ENCODE measurements at regions of chr2 and their contacts with region 1.

Region 1: DNA sequence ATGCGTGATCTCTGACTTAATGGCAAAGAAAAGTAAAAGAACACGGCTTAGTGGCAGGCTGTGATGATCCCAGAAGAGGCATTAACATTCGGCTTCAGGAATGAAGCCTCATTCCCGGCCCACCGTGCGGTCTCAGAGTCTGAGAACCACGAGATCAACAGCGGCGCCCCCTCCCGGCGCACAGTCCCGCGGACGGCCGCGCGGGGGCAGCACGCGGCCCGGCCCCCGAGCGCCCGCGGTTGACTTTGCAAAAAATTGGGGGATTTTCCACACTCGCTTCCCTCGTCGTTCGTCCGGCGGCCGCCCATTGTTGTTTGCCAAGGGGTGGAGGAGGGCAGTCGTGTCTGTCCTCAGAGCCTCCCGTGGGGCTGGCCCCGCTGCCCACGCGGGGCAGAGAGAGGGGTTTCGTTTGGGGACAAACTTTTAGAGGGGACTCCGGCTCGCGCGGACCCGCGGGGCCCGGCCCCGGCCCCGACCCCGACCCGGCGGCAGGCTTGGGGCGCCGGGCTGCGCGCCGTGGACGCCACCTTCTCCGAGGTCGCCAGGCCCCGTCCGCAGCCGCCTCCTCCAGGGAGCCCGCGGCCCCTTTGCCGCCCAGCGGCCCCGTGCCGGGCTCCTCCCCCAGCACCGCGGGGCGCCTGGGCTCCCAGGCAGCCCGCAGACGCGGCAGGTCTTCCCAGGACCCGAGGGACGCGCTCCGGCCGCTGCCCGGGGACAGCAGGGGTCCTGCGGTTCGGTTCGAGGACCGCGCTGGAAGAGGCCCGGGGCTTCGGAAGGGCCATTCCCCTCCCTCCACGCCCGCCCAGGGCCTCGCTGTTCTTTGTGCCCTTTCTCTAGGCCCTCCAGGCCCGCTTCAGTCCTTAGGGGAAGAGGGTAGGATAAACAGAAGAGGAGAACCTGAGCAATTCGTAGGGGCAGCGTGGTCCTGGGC is 3.4 kb upstream of the HS6ST1 start:
- DNase-seq: peak; percentile 54 to 91 (median 74)
- ATAC-seq: peak; percentile 65
- H3K4me3 ChIP-seq: peak overlapping the region; percentile 54
- H3K4me3 Mint-ChIP-seq: peak overlapping the region; percentile 87
- H3K27ac ChIP-seq: no peak overlapping the region
- H3K27ac Mint-ChIP-seq: peak overlapping the region; percentile 42
- H3K4me1 ChIP-seq: peaks cover 25% of the 10 kb centered on the region
- H3K4me1 Mint-ChIP-seq: peaks cover 22% of the 10 kb centered on the region
- H3K27me3 ChIP-seq: no peaks in the 10 kb centered on the region
- H3K27me3 Mint-ChIP-seq: no peaks in the 10 kb centered on the region
- CTCF ChIP-seq: peak; percentile 89

Region 2: DNA sequence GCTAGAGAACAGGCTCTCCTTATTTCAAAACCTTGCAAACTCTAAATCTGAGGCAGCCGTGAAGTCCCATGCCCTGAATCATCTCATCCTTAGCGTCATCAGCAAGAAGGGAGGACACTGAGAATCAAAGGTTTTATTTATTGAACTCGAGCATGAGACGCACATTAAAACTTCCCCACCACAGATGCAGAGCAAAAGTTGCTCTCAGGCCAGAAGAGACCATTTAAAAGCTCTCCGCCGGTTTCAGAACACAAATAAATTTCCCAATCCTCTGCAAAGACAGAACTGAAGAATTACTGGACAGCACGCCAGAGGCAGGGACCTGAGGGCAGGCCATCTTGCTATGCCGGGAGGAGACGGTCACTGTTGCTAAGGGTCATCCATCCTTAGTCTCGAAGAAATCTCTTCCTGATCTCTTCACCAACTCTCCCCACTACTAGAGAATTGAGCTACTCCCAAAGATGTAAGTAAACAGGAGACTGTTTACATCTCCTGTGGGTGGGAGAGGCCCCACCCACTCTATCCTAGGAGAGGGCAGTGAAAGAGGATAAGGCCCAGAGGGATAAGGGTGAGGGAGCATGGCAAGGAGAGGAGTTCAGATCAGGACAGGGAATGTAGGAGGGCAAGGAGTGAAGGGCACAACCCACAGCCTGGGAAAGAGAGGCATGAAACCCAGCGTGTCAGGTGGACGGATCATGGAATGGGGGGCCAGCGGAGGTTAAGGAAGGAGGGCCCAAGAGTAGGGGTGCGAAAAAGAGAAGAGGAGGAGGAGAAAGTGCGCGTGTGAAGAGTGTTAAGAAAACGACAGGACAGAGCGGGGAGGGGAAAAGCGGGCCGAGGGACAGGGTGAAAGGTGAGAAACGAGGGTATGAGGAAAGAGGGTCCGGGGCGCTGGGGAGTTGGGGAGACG is 437.4 kb before region 1 on chr2:
- CTCF ChIA-PET with region 1: no interaction called
- POLR2A ChIA-PET with region 1: no interaction called
- intact Hi-C with region 1: loop called in 1 of 2 experiments (anchors 10 kb)
- DNase-seq: no peak
- ATAC-seq: no peak
- H3K4me3 ChIP-seq: peak overlapping the region; percentile 46
- H3K4me3 Mint-ChIP-seq: peak overlapping the region; percentile 97
- H3K27ac ChIP-seq: no peak overlapping the region
- H3K27ac Mint-ChIP-seq: peak overlapping the region; percentile 88
- H3K4me1 ChIP-seq: peaks cover 21% of the 10 kb centered on the region
- H3K4me1 Mint-ChIP-seq: peaks cover 64% of the 10 kb centered on the region
- H3K27me3 ChIP-seq: no peaks in the 10 kb centered on the region
- H3K27me3 Mint-ChIP-seq: no peaks in the 10 kb centered on the region
- CTCF ChIP-seq: no peak

Region 3: GRCh38 chr2:128090945-128091725 is 230.9 kb before region 1 on chr2 and contains the start of gene UGGT1:
- CTCF ChIA-PET with region 1: no interaction called
- POLR2A ChIA-PET with region 1: no interaction called
- intact Hi-C with region 1: loop called in 1 of 2 experiments (anchors 5 kb)
- DNase-seq: peak; percentile 88 to 98 (median 91)
- ATAC-seq: peak; percentile 96
- H3K4me3 ChIP-seq: peak within 1 kb of the TSS; percentile 89
- H3K4me3 Mint-ChIP-seq: peak within 1 kb of the TSS; percentile 98
- H3K27ac ChIP-seq: peak within 1 kb of the TSS; percentile 75 to 82
- H3K27ac Mint-ChIP-seq: peak within 1 kb of the TSS; percentile 97
- H3K4me1 ChIP-seq: peaks cover 26% of the 10 kb centered on the region
- H3K4me1 Mint-ChIP-seq: peaks cover 53% of the 10 kb centered on the region
- H3K27me3 ChIP-seq: no peaks in the 10 kb centered on the region
- H3K27me3 Mint-ChIP-seq: no peaks in the 10 kb centered on the region
- CTCF ChIP-seq: no peak
- total RNA-seq, gene UGGT1: 23.5 to 28.4 TPM

Region 4: GRCh38 chr2:128187032-128187654 is 134.9 kb before region 1 on chr2:
- CTCF ChIA-PET with region 1: no interaction called
- POLR2A ChIA-PET with region 1: no interaction called
- intact Hi-C with region 1: loop called in 1 of 2 experiments (anchors 10 kb)
- DNase-seq: no peak
- ATAC-seq: no peak
- H3K4me3 ChIP-seq: no peak overlapping the region
- H3K4me3 Mint-ChIP-seq: no peak overlapping the region
- H3K27ac ChIP-seq: no peak overlapping the region
- H3K27ac Mint-ChIP-seq: no peak overlapping the region
- H3K4me1 ChIP-seq: no peaks in the 10 kb centered on the region
- H3K4me1 Mint-ChIP-seq: no peaks in the 10 kb centered on the region
- H3K27me3 ChIP-seq: no peaks in the 10 kb centered on the region
- H3K27me3 Mint-ChIP-seq: no peaks in the 10 kb centered on the region
- CTCF ChIP-seq: no peak

Region 5: GRCh38 chr2:129849559-129850160 is 1527.6 kb after region 1 on chr2:
- CTCF ChIA-PET with region 1: no interaction called
- POLR2A ChIA-PET with region 1: no interaction called
- intact Hi-C with region 1: loop called in 1 of 2 experiments (anchors 2 kb)
- DNase-seq: peak in 3 of 14 experiments; percentile 74 to 80 (median 79)
- ATAC-seq: peak; percentile 81
- H3K4me3 ChIP-seq: no peak overlapping the region
- H3K4me3 Mint-ChIP-seq: no peak overlapping the region
- H3K27ac ChIP-seq: no peak overlapping the region
- H3K27ac Mint-ChIP-seq: no peak overlapping the region
- H3K4me1 ChIP-seq: no peaks in the 10 kb centered on the region
- H3K4me1 Mint-ChIP-seq: peaks cover 5% of the 10 kb centered on the region
- H3K27me3 ChIP-seq: peaks cover 4 to 6% of the 10 kb centered on the region in 2 experiments
- H3K27me3 Mint-ChIP-seq: peaks cover 32% of the 10 kb centered on the region
- CTCF ChIP-seq: peak; percentile 75

Region 6: GRCh38 chr2:129923265-129924091 is 1601.4 kb after region 1 on chr2:
- CTCF ChIA-PET with region 1: no interaction called
- POLR2A ChIA-PET with region 1: no interaction called
- intact Hi-C with region 1: loop called in 1 of 2 experiments (anchors 5 kb)
- DNase-seq: peak in 2 of 14 experiments; percentile 4 to 24
- ATAC-seq: no peak
- H3K4me3 ChIP-seq: no peak overlapping the region
- H3K4me3 Mint-ChIP-seq: no peak overlapping the region
- H3K27ac ChIP-seq: no peak overlapping the region
- H3K27ac Mint-ChIP-seq: no peak overlapping the region
- H3K4me1 ChIP-seq: peaks cover 4% of the 10 kb centered on the region
- H3K4me1 Mint-ChIP-seq: peaks cover 5% of the 10 kb centered on the region
- H3K27me3 ChIP-seq: peaks cover 17 to 21% of the 10 kb centered on the region in 2 experiments
- H3K27me3 Mint-ChIP-seq: peaks cover 54% of the 10 kb centered on the region
- CTCF ChIP-seq: no peak